CD4-positive, alpha-beta T cell (primary cell): ENCODE measurements at regions of chr3 and their contacts with region 1.

Region 1: GRCh38 chr3:158097593-158098308 is 8.5 kb downstream of the SHOX2 start:
- DNase-seq: peak in 13 of 14 experiments; percentile 43 to 89 (median 63)
- ATAC-seq: peak; percentile 96
- H3K4me3 ChIP-seq: peak overlapping the region; percentile 61
- H3K4me3 Mint-ChIP-seq: peak overlapping the region; percentile 91
- H3K27ac ChIP-seq: no peak overlapping the region
- H3K27ac Mint-ChIP-seq: peak overlapping the region; percentile 57
- H3K4me1 ChIP-seq: peaks cover 28% of the 10 kb centered on the region
- H3K4me1 Mint-ChIP-seq: peaks cover 32% of the 10 kb centered on the region
- H3K27me3 ChIP-seq: peaks cover 77 to 98% of the 10 kb centered on the region in 2 experiments
- H3K27me3 Mint-ChIP-seq: peaks cover 100% of the 10 kb centered on the region
- CTCF ChIP-seq: no peak

Region 2: GRCh38 chr3:156808025-156808424 is 1289.7 kb before region 1 on chr3:
- CTCF ChIA-PET with region 1: no interaction called
- POLR2A ChIA-PET with region 1: no interaction called
- intact Hi-C with region 1: loop called in 1 of 2 experiments (anchors 10 kb)
- DNase-seq: no peak
- ATAC-seq: no peak
- H3K4me3 ChIP-seq: no peak overlapping the region
- H3K4me3 Mint-ChIP-seq: no peak overlapping the region
- H3K27ac ChIP-seq: no peak overlapping the region
- H3K27ac Mint-ChIP-seq: no peak overlapping the region
- H3K4me1 ChIP-seq: peaks cover 3% of the 10 kb centered on the region
- H3K4me1 Mint-ChIP-seq: peaks cover 6% of the 10 kb centered on the region
- H3K27me3 ChIP-seq: no peaks in the 10 kb centered on the region
- H3K27me3 Mint-ChIP-seq: no peaks in the 10 kb centered on the region
- CTCF ChIP-seq: no peak

Region 3: DNA sequence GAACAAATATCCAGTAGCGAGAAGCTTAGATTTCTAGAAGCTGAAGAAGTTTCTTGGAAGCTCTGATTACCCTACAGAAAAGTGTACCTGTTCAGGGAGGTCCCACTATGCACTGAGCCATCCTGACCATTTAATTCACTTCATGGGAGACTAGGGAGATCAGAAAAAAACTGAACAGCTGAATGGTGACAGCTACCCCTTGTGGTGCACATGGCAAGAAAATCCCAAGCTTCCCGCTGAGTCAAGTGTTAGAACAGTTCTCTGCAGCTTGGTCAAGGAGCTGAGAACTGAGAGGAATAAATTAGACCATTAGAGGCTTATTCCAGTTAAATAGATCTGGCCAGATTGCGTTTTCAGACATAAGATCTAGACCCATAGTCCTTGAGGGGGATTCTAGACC is 397.3 kb before region 1 on chr3:
- CTCF ChIA-PET with region 1: no interaction called
- POLR2A ChIA-PET with region 1: no interaction called
- intact Hi-C with region 1: no loop called
- DNase-seq: no peak
- ATAC-seq: no peak
- H3K4me3 ChIP-seq: no peak overlapping the region
- H3K4me3 Mint-ChIP-seq: no peak overlapping the region
- H3K27ac ChIP-seq: no peak overlapping the region
- H3K27ac Mint-ChIP-seq: no peak overlapping the region
- H3K4me1 ChIP-seq: no peaks in the 10 kb centered on the region
- H3K4me1 Mint-ChIP-seq: no peaks in the 10 kb centered on the region
- H3K27me3 ChIP-seq: peaks cover 0 to 2% of the 10 kb centered on the region in 2 experiments
- H3K27me3 Mint-ChIP-seq: no peaks in the 10 kb centered on the region
- CTCF ChIP-seq: no peak

Region 4: DNA sequence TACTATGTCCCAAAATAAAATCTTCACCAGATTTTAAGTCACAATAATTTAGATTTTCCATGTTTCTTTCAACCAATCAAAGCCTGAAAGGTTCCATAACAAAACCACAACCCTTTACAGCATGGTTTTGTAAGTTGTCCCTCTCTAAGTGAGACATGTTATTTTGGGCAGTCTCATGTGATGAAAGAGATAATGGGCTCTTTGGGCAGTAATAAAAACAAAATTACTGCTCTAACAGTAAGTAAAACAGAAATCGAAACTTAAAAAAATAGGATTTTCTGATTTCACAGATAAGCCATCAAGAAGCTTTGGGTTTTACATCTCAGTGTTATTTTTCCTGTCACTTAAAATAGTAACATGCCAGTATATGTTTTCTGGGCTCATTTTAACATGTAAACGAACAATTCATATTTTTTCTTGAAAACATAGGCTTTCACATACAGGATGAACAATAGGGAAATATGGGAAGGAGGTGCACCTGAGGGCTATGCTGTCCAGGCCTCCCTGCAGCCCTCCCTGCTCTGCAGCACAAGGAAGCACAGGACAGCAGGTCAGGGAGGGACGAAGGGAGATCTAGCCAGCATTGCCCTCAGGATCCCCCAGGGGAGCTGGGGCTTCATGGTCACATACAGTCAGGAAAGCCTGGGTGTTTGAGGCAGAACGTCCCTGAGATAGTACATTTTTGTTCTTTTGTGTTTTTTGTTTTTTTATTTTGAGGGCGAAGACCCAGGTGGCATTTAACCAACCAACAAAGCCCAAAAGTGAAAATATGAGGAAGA is 149.0 kb before region 1 on chr3:
- CTCF ChIA-PET with region 1: no interaction called
- POLR2A ChIA-PET with region 1: no interaction called
- intact Hi-C with region 1: no loop called
- DNase-seq: no peak
- ATAC-seq: no peak
- H3K4me3 ChIP-seq: no peak overlapping the region
- H3K4me3 Mint-ChIP-seq: no peak overlapping the region
- H3K27ac ChIP-seq: no peak overlapping the region
- H3K27ac Mint-ChIP-seq: no peak overlapping the region
- H3K4me1 ChIP-seq: no peaks in the 10 kb centered on the region
- H3K4me1 Mint-ChIP-seq: no peaks in the 10 kb centered on the region
- H3K27me3 ChIP-seq: no peaks in the 10 kb centered on the region
- H3K27me3 Mint-ChIP-seq: peaks cover 5% of the 10 kb centered on the region
- CTCF ChIP-seq: no peak

Region 5: DNA sequence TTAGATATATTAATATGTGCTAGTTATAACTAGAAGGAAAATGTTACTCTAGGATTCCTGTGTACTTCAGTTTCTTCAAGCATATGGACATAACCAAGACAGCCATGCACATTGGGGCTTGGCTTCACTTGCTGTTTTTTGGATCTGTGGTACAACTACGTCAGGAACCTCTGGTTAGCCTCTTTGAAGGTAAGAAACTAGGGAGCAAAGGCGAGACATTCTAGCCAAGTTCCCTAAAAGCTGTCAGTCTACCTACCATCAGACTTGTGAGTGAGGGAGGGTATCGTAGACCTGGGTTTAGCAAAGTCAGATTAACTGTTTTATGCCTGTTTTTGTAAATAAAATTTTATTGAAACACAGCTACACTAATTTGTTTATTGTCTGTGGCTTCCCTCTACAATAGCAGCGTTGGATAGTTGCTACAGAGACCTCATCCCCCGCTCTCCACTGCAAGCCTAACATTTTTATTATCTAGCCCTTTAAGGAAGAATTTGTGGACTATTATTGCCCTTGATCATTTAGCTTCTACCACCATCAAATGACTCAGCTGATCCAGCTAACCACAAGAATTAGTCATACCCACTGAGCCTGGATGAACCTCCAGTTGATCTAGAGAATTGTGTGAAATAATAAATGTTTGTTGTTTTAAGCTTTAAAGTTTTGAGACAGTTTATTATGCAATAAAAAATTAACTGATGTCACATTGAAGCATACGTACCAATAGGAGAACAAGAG is 70.2 kb after region 1 on chr3:
- CTCF ChIA-PET with region 1: no interaction called
- POLR2A ChIA-PET with region 1: no interaction called
- intact Hi-C with region 1: no loop called
- DNase-seq: peak in 3 of 14 experiments; percentile 1 to 49 (median 35)
- ATAC-seq: peak; percentile 26
- H3K4me3 ChIP-seq: no peak overlapping the region
- H3K4me3 Mint-ChIP-seq: no peak overlapping the region
- H3K27ac ChIP-seq: no peak overlapping the region
- H3K27ac Mint-ChIP-seq: no peak overlapping the region
- H3K4me1 ChIP-seq: no peaks in the 10 kb centered on the region
- H3K4me1 Mint-ChIP-seq: no peaks in the 10 kb centered on the region
- H3K27me3 ChIP-seq: no peaks in the 10 kb centered on the region
- H3K27me3 Mint-ChIP-seq: no peaks in the 10 kb centered on the region
- CTCF ChIP-seq: no peak

Region 6: DNA sequence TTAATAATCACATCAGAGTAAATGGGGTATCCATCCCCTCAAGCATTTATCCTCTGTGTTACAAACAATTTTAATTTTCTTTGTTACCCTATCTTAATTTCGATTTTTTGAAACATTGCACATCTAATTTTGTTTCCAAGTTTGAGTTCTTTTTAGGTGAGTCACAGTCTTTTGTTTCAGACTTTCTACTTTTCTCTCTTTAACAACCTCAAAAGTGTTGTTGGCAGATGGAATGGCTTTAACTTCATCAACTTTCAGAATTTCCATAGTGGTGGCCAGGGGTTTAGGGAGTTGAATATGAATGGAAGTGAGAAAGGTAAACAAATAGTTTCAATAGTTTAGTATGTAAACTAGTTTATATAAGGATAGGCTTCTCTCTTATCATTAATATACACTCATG is 250.2 kb after region 1 on chr3:
- CTCF ChIA-PET with region 1: no interaction called
- POLR2A ChIA-PET with region 1: no interaction called
- intact Hi-C with region 1: no loop called
- DNase-seq: no peak
- ATAC-seq: no peak
- H3K4me3 ChIP-seq: no peak overlapping the region
- H3K4me3 Mint-ChIP-seq: no peak overlapping the region
- H3K27ac ChIP-seq: no peak overlapping the region
- H3K27ac Mint-ChIP-seq: no peak overlapping the region
- H3K4me1 ChIP-seq: no peaks in the 10 kb centered on the region
- H3K4me1 Mint-ChIP-seq: no peaks in the 10 kb centered on the region
- H3K27me3 ChIP-seq: no peaks in the 10 kb centered on the region
- H3K27me3 Mint-ChIP-seq: no peaks in the 10 kb centered on the region
- CTCF ChIP-seq: no peak